Endothelial cell of umbilical vein (primary cell): ENCODE measurements at regions of chr9 and their contacts with region 1.

Region 1: GRCh38 chr9:95756986-95757385 is 118.5 kb upstream of the ERCC6L2 start:
- DNase-seq: peak; percentile 79
- H3K4me3 ChIP-seq: no peak overlapping the region
- H3K27ac ChIP-seq: no peak overlapping the region
- H3K4me1 ChIP-seq: peaks cover 5% of the 10 kb centered on the region
- H3K27me3 ChIP-seq: no peaks in the 10 kb centered on the region
- CTCF ChIP-seq: no peak
- POLR2A ChIP-seq: no peak

Region 2: DNA sequence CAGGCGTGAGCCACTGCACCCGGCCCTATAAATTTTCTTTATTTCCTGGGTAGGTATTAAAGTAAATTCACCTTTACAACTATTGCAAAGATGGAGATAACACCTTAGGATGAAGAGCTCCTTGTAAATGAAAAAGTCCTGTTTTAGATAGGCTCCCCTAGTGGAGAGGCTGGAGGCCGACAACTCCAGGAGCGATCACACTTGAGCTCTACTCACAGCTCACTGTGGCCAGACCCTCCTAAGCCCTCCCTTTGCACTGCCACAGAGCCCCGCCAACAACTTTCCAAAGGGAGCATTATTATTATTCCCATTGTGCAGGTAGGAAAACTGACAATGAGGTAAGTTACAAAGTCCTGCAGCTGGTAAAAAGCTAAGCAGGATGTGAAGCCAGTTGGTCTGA is 20.6 kb before region 1 on chr9:
- CTCF ChIA-PET with region 1: interaction called, 10 read pairs
- POLR2A ChIA-PET with region 1: no interaction called
- dilution Hi-C with region 1: no loop called
- intact Hi-C with region 1: no loop called
- DNase-seq: no peak
- H3K4me3 ChIP-seq: no peak overlapping the region
- H3K27ac ChIP-seq: no peak overlapping the region
- H3K4me1 ChIP-seq: no peaks in the 10 kb centered on the region
- H3K27me3 ChIP-seq: no peaks in the 10 kb centered on the region
- CTCF ChIP-seq: peak; percentile 27 to 43
- POLR2A ChIP-seq: no peak